ENCODE measurements at regions of chr5 and their contacts with region 1.

Region 1: GRCh38 chr5:75067434-75067833 is 15.1 kb upstream of the GCNT4 start:
- DNase-seq: no peak
- H3K4me3 Mint-ChIP-seq: no peak overlapping the region
- H3K27ac Mint-ChIP-seq: no peak overlapping the region
- H3K4me1 Mint-ChIP-seq: peaks cover 32% of the 10 kb centered on the region
- H3K27me3 Mint-ChIP-seq: no peaks in the 10 kb centered on the region

Region 2: DNA sequence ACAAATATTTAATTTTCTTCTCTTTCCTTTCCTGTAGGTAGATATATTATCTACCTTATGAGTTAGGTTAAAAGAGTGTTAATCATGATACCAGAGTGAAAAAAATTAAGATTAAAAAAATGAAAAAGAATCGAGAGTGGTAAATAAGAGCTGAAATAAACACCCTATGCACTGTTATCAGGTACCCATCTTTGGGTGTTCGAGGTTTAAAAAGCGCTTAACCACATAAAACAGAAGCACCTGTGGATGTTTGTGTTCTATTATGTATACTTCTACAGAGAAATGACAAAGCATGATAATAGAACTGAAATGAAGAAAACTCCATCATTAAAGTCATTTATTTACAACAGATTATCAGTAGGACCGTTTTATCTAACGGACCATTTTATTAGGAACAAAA is 10.6 kb after region 1 on chr5:
- CTCF ChIA-PET with region 1: no interaction called
- intact Hi-C with region 1: loop called (anchors 1 kb)
- DNase-seq: no peak
- H3K4me3 Mint-ChIP-seq: no peak overlapping the region
- H3K27ac Mint-ChIP-seq: no peak overlapping the region
- H3K4me1 Mint-ChIP-seq: peaks cover 26% of the 10 kb centered on the region
- H3K27me3 Mint-ChIP-seq: no peaks in the 10 kb centered on the region

Region 3: DNA sequence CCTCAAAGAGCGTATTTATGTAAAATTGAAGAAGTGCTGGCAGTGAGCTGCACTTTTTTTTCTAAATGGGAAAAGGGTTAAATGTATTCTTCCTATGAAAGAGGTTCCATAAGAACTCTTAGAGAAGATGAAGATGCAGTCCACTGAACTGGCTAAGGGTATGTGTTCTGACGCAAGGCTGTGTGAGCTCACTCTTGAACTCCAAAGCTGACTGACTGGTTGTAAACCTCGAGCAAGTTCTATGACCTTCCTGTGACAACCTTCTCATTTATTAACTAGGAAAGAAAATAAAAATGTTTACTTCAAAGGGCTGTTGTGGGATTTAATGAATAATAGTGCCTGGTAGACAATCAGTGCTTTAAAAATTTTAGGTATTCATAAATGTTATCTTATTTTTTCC is 603.1 kb after region 1 on chr5:
- CTCF ChIA-PET with region 1: no interaction called
- intact Hi-C with region 1: no loop called
- DNase-seq: no peak
- H3K4me3 Mint-ChIP-seq: no peak overlapping the region
- H3K27ac Mint-ChIP-seq: no peak overlapping the region
- H3K4me1 Mint-ChIP-seq: peaks cover 30% of the 10 kb centered on the region
- H3K27me3 Mint-ChIP-seq: no peaks in the 10 kb centered on the region